ENCODE measurements at regions of chr7 and their contacts with region 1.

Region 1: GRCh38 chr7:101772513-101773211 is 44.8 kb upstream of the CUX1 start:
- DNase-seq: no peak
- ATAC-seq: no peak

Region 2: GRCh38 chr7:100874577-100875355 is 897.9 kb before region 1 on chr7 and contains the start of gene SRRT:
- intact Hi-C with region 1: loop called (anchors 10 kb)
- DNase-seq: peak; percentile 99
- ATAC-seq: peak; percentile 98
- total RNA-seq, gene SRRT: 114 TPM

Region 3: DNA sequence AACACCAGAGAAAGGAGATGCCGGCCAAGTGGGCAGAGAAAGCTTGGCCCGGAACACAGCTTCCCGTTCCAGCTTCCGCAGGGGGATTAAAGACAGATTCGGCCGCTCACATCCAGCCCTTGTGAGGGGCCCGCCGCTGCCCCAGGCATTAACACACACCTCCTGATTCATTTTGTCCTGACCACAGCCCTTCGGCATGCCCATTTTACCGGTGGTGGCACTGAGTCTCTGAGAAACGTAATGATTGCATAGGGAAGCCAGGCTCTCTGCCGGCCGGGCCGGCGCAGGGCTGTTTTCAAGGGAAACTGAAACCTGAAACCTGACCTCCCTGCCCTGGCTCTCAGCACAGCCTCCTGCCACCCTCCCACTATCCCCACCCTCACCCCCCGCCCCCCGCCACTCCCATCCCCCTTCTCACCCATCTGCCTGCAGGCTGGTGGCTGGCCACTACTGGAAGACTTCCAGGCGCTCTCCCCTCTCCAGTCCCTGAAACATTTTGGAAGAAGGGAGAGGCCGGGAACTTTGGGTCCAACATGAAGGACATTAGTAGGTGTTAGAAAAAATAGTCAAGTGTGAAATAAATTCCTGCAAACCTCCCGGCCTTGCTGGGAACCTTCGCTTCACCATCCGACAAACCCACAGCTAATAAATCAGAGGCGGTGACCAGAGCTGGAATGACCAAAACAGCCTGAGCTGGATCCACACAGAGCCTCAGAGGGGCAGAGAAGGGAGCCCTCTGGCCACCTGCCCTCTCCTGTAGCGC is 38.8 kb before region 1 on chr7:
- intact Hi-C with region 1: no loop called
- DNase-seq: no peak
- ATAC-seq: peak; percentile 87

Measured in sciatic nerve (tissue), 2 donors.